ENCODE measurements at regions of chr11 and their contacts with region 1.

Region 1: GRCh38 chr11:15101072-15101709 is 13.5 kb upstream of the INSC start:
- DNase-seq: peak in 4 of 5 donors; percentile 19 to 22 (median 21)
- H3K4me3 ChIP-seq: no peak overlapping the region
- H3K4me3 Mint-ChIP-seq: peak overlapping the region in 1 of 8 donors; percentile 27
- H3K27ac ChIP-seq: no peak overlapping the region
- H3K27ac Mint-ChIP-seq: no peak overlapping the region
- H3K4me1 ChIP-seq: no peaks in the 10 kb centered on the region
- H3K4me1 Mint-ChIP-seq: peaks cover 0 to 3% (median under 1%) of the 10 kb centered on the region in 4 donors
- H3K27me3 ChIP-seq: no peaks in the 10 kb centered on the region
- H3K27me3 Mint-ChIP-seq: peaks cover 4 to 7% of the 10 kb centered on the region in 2 donors

Region 2: GRCh38 chr11:14969922-14970323 is 131.3 kb before region 1 on chr11:
- CTCF ChIA-PET with region 1: no interaction called
- POLR2A ChIA-PET with region 1: no interaction called
- intact Hi-C with region 1: no loop called
- DNase-seq: peak in 4 of 5 donors; percentile 7 to 18 (median 14)
- H3K4me3 ChIP-seq: no peak overlapping the region
- H3K4me3 Mint-ChIP-seq: no peak overlapping the region
- H3K27ac ChIP-seq: no peak overlapping the region
- H3K27ac Mint-ChIP-seq: no peak overlapping the region
- H3K4me1 ChIP-seq: peaks cover 23% of the 10 kb centered on the region
- H3K4me1 Mint-ChIP-seq: peaks cover 11 to 31% (median 20%) of the 10 kb centered on the region in 4 donors
- H3K27me3 ChIP-seq: peaks cover 34% of the 10 kb centered on the region
- H3K27me3 Mint-ChIP-seq: peaks cover 45 to 52% of the 10 kb centered on the region in 2 donors

Region 3: GRCh38 chr11:14980854-14981253 is 120.3 kb before region 1 on chr11:
- CTCF ChIA-PET with region 1: no interaction called
- POLR2A ChIA-PET with region 1: no interaction called
- intact Hi-C with region 1: no loop called
- DNase-seq: no peak
- H3K4me3 ChIP-seq: no peak overlapping the region
- H3K4me3 Mint-ChIP-seq: no peak overlapping the region
- H3K27ac ChIP-seq: no peak overlapping the region
- H3K27ac Mint-ChIP-seq: no peak overlapping the region
- H3K4me1 ChIP-seq: no peaks in the 10 kb centered on the region
- H3K4me1 Mint-ChIP-seq: peaks cover 0 to 2% (median 0%) of the 10 kb centered on the region in 4 donors
- H3K27me3 ChIP-seq: peaks cover 6% of the 10 kb centered on the region
- H3K27me3 Mint-ChIP-seq: peaks cover 9 to 11% of the 10 kb centered on the region in 2 donors

Region 4: GRCh38 chr11:15112131-15112541 is 10.9 kb after region 1 on chr11:
- CTCF ChIA-PET with region 1: interaction called, 20 read pairs
- POLR2A ChIA-PET with region 1: no interaction called
- intact Hi-C with region 1: no loop called
- DNase-seq: no peak
- H3K4me3 ChIP-seq: no peak overlapping the region
- H3K4me3 Mint-ChIP-seq: no peak overlapping the region
- H3K27ac ChIP-seq: no peak overlapping the region
- H3K27ac Mint-ChIP-seq: no peak overlapping the region
- H3K4me1 ChIP-seq: no peaks in the 10 kb centered on the region
- H3K4me1 Mint-ChIP-seq: peaks cover 4 to 14% (median 7%) of the 10 kb centered on the region in 4 donors
- H3K27me3 ChIP-seq: peaks cover 6% of the 10 kb centered on the region
- H3K27me3 Mint-ChIP-seq: peaks cover 17 to 24% of the 10 kb centered on the region in 2 donors

Region 5: DNA sequence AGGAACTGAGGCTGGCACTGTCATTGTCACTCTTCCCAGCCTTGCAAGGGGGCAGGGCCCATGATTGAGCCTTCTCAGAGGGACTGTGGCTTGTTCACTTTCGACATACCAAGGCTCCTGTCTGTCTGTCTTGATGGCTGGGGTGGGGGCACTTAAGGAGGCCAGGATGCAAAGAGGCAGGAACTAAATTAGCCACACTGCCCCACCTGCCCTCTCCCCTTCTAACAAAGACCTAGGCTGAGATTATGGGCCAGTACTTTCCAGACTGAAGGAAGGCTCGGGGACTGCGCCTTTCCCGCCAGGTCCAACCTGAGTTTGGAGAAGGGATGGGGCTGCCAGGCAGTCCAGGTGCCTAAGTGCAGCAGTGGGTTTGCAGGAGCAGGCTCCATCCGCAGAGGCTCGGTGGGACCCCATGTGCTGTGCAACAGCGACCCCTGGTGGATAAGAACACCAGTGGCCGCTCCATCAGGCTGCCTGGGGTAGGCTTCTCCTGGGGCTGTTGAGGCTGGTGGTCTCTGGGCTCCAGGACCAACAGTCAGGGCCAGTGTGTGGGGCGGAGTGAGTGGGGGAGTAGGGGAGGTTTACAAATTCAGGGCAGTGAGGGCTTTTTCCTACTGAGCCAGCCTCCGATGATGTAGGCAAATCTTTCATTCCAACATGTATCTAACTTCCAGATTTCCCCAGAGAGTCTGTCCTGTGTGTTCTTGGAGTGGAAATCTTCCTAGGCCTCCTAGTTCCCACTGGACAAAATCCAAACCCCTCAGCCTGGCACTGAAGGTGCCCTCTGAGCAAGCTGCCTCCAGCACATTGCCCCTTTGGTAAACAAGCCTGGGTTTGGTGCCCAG is 107.4 kb after region 1 on chr11:
- CTCF ChIA-PET with region 1: interaction called, 42 read pairs
- POLR2A ChIA-PET with region 1: no interaction called
- intact Hi-C with region 1: loop called (anchors 1 kb)
- DNase-seq: peak; percentile 49 to 68 (median 57)
- H3K4me3 ChIP-seq: no peak overlapping the region
- H3K4me3 Mint-ChIP-seq: no peak overlapping the region
- H3K27ac ChIP-seq: no peak overlapping the region
- H3K27ac Mint-ChIP-seq: no peak overlapping the region
- H3K4me1 ChIP-seq: no peaks in the 10 kb centered on the region
- H3K4me1 Mint-ChIP-seq: no peaks in the 10 kb centered on the region
- H3K27me3 ChIP-seq: no peaks in the 10 kb centered on the region
- H3K27me3 Mint-ChIP-seq: peaks cover 0 to 2% of the 10 kb centered on the region in 2 donors

Region 6: GRCh38 chr11:16605894-16606783 is 1504.9 kb after region 1 on chr11:
- CTCF ChIA-PET with region 1: no interaction called
- POLR2A ChIA-PET with region 1: no interaction called
- intact Hi-C with region 1: loop called (anchors 10 kb)
- DNase-seq: peak; percentile 74 to 83 (median 78)
- H3K4me3 ChIP-seq: peak overlapping the region; percentile 37 to 52
- H3K4me3 Mint-ChIP-seq: peak overlapping the region; percentile 76 to 89 (median 86)
- H3K27ac ChIP-seq: no peak overlapping the region
- H3K27ac Mint-ChIP-seq: peak overlapping the region; percentile 5 to 86 (median 52)
- H3K4me1 ChIP-seq: peaks cover 41% of the 10 kb centered on the region
- H3K4me1 Mint-ChIP-seq: peaks cover 16 to 34% (median 25%) of the 10 kb centered on the region in 4 donors
- H3K27me3 ChIP-seq: peaks cover 74% of the 10 kb centered on the region
- H3K27me3 Mint-ChIP-seq: peaks cover 27 to 52% of the 10 kb centered on the region in 2 donors

Measured in CD4-positive, alpha-beta memory T cell (primary cell).